T-cell (primary cell): ENCODE measurements at regions of chr6 and their contacts with region 1.

Region 1: GRCh38 chr6:33585403-33586107 is 5.5 kb upstream of the BAK1 start:
- DNase-seq: peak; percentile 63 to 93 (median 79)
- ATAC-seq: peak; percentile 89 to 93 (median 90)
- H3K4me3 ChIP-seq: peak overlapping the region in 1 of 2 donors; percentile 15
- H3K4me3 Mint-ChIP-seq: peak overlapping the region in 2 of 3 donors; percentile 31 to 50
- H3K27ac ChIP-seq: peak overlapping the region; percentile 67
- H3K27ac Mint-ChIP-seq: peak overlapping the region; percentile 90
- H3K4me1 ChIP-seq: peaks cover 10 to 25% of the 10 kb centered on the region in 2 experiments
- H3K4me1 Mint-ChIP-seq: peaks cover 11 to 25% (median 16%) of the 10 kb centered on the region in 3 donors
- H3K27me3 ChIP-seq: no peaks in the 10 kb centered on the region
- H3K27me3 Mint-ChIP-seq: no peaks in the 10 kb centered on the region

Region 2: GRCh38 chr6:32529697-32530429 is 1055.7 kb before region 1 on chr6 and contains the start of gene HLA-DRB5:
- CTCF ChIA-PET with region 1: no interaction called
- POLR2A ChIA-PET with region 1: no interaction called
- DNase-seq: peak in 8 of 35 experiments; percentile 1 to 37 (median 4)
- ATAC-seq: peak; percentile 23 to 73 (median 59)
- H3K4me3 ChIP-seq: peak within 1 kb of the TSS in 1 of 2 donors; percentile 41
- H3K4me3 Mint-ChIP-seq: peak within 1 kb of the TSS; percentile 34 to 69 (median 37)
- H3K27ac ChIP-seq: peak within 1 kb of the TSS; percentile 34
- H3K27ac Mint-ChIP-seq: peak within 1 kb of the TSS in 1 of 2 donors; percentile 25
- H3K4me1 ChIP-seq: no peaks in the 10 kb centered on the region
- H3K4me1 Mint-ChIP-seq: peaks cover 1 to 5% (median 5%) of the 10 kb centered on the region in 3 donors
- H3K27me3 ChIP-seq: no peaks in the 10 kb centered on the region
- H3K27me3 Mint-ChIP-seq: peaks cover 0 to 3% of the 10 kb centered on the region in 2 donors
- total RNA-seq, gene HLA-DRB5: 3.2 to 14.0 (median 8.0) TPM in 4 of 5 donors, not detected in the other

Region 3: DNA sequence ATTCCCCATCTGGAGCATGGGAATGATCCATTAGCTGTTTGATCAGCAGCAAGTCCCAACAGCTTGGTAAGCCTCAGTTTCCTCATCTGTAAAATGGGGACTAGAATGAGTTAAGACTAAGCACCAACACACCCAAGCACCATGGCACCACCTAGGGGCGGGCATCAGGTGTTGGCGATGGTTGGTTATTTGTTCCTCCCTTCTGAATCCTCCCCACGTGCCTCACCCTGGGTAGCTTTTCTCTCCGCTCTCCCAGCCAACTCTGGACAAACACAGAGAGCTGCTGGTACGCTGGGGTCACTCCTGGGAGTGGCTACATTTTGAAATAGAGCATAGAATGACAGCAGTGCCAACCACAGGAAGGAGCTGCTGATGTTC is 22.2 kb after region 1 on chr6:
- CTCF ChIA-PET with region 1: interaction called, 4 to 10 read pairs
- POLR2A ChIA-PET with region 1: no interaction called
- DNase-seq: peak in 7 of 35 experiments; percentile 18 to 53 (median 24)
- ATAC-seq: peak in 2 of 4 experiments; percentile 54 to 63
- H3K4me3 ChIP-seq: no peak overlapping the region
- H3K4me3 Mint-ChIP-seq: no peak overlapping the region
- H3K27ac ChIP-seq: no peak overlapping the region
- H3K27ac Mint-ChIP-seq: no peak overlapping the region
- H3K4me1 ChIP-seq: no peaks in the 10 kb centered on the region
- H3K4me1 Mint-ChIP-seq: peaks cover 0 to 7% (median 0%) of the 10 kb centered on the region in 3 donors
- H3K27me3 ChIP-seq: peaks cover 0 to 33% of the 10 kb centered on the region in 2 experiments
- H3K27me3 Mint-ChIP-seq: no peaks in the 10 kb centered on the region

Region 4: DNA sequence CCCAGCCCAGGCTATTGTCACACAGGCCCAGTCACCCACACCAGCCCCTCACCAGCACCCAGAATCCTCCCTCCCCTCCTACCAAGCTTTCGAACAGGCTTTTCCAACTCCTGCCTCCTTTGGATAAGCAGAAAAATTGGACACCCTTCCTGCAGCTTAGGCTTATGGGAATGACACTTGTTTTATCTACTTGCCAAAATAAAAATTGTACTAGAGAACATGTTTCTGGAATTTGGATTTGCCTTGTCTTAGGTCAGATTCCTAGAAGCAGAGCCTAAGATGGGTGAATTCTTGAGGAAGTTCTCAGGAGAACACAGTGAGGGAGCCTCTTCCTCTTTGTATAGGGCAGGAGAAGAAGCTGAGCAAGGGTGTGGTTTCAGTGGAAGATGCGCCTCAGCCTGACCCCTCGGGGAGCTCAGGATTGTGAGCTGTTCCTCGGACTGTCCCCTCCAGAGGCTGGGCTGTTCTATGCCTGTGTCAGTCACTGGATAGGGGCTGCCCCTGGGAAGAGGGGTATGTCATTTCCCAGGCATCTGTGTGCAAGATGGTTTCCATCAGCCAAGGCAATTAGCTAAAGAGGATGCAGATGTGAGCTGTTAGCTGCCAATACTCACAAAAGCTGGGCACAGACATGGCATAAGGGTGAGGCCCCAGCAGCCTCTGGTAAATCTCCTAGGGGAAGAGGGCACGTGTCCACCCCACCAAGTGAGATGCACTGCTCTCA is 69.4 kb after region 1 on chr6:
- CTCF ChIA-PET with region 1: interaction called in 1 of 2 experiments, 15 read pairs
- POLR2A ChIA-PET with region 1: no interaction called
- DNase-seq: no peak
- ATAC-seq: no peak
- H3K4me3 ChIP-seq: no peak overlapping the region
- H3K4me3 Mint-ChIP-seq: no peak overlapping the region
- H3K27ac ChIP-seq: no peak overlapping the region
- H3K27ac Mint-ChIP-seq: no peak overlapping the region
- H3K4me1 ChIP-seq: no peaks in the 10 kb centered on the region
- H3K4me1 Mint-ChIP-seq: peaks cover 3 to 5% (median 4%) of the 10 kb centered on the region in 3 donors
- H3K27me3 ChIP-seq: no peaks in the 10 kb centered on the region
- H3K27me3 Mint-ChIP-seq: no peaks in the 10 kb centered on the region